SK-N-SH (cell line): ENCODE measurements at regions of chr2 and their contacts with region 1.

Region 1: DNA sequence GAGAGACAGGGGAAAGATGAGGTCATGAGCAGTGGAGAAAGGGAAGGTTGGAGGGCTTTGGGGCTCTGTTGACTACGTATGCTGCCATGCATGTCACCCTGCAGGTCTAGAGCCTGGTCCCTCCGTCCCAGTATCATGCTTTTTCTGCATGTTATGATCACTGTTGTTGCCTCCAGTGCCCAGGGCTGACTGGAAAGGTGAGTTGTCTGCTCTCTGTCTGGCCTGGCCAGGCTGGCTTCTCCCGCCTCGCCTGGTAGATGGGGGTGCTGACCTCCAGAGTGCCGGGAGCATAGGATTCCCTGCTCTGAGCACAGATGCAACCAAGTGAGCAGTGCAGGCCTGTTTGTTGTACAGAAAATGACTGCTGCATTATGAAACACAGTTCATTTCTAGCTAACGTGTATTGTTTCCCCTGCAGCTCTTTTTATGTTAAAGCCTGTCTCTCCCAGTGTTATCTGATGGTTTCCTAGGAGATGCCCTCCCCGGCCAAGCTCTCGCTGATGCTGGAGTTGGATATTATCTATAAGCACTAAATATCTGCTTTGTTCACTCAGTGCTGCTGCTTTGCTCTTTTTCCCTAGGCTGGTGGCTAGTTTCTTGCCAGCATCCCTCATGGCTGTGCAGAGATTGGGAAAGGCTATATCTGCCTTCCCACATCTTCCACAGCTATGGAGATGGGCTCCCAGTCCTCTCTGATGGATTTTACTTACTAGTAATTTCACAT is 158.2 kb downstream of the TDRD15 start:
- DNase-seq: peak; percentile 92
- H3K4me3 ChIP-seq: no peak overlapping the region
- H3K27ac ChIP-seq: peak overlapping the region; percentile 12 to 99; a peak in 2 of 4 replicates
- H3K4me1 ChIP-seq: peaks cover 0 to 67% of the 10 kb centered on the region in 2 experiments; a peak in 2 of 4 replicates
- H3K27me3 ChIP-seq: no peaks in the 10 kb centered on the region
- CTCF ChIP-seq: no peak
- EP300 ChIP-seq: no peak; a peak in 2 of 4 replicates
- RAD21 ChIP-seq: peak; percentile 52

Region 2: DNA sequence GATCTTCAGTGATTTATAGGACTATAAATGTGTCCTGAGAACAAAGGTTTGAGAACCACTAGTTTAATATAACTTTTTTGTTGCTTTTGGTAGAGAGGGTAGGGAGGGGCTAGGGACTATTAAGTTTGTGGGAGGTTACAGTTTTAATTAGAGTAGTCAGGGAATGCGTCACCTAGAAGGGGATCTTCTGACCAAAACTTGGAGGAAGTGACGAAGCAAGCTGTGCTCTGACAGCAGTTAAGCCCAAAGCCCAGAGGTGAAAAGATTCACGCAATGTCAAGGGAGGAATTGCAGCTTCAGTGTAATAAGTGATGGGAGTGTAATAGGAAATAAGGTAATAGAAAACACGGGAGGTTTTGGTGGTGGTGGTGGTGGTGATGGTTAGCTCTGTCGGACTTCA is 150.1 kb before region 1 on chr2:
- CTCF ChIA-PET with region 1: no interaction called
- POLR2A ChIA-PET with region 1: no interaction called
- DNase-seq: no peak
- H3K4me3 ChIP-seq: no peak overlapping the region
- H3K27ac ChIP-seq: no peak overlapping the region
- H3K4me1 ChIP-seq: no peaks in the 10 kb centered on the region
- H3K27me3 ChIP-seq: no peaks in the 10 kb centered on the region
- CTCF ChIP-seq: no peak
- EP300 ChIP-seq: no peak
- RAD21 ChIP-seq: no peak

Region 3: DNA sequence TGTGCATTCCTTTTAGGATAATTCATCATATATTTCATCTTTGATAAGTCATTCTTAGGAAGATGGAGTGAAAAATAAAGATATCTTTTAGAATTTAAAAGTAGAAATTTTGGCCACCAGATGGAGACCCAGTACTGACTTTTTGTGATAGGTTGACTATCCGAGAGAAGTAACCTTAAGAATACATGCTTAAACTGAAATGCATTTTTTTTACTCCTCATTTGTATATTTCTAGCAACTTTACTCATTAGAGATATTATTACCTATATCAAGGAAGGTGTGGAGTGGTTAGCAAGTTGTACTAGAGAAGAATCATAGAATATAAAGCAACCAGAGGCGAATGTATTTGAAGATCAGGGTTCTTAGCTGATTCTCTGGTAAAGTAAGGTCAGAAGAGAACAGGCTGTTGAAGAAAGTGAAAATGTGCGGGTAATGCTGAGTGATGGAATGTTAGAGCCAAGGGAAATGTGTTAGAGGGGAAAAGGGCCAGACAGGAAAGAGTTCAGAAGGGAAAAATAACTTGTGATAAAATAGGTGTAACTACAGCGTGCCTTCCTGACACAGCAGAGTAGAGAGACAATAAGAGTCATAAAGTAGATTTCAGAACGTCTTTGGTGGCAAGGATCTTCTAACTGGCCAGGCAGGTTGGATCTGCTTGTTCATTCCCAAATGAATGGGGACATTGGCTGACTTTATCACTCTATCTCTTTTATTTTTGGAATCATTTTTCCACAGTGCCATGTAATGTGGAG is 105.9 kb before region 1 on chr2:
- CTCF ChIA-PET with region 1: interaction called, 10 read pairs
- POLR2A ChIA-PET with region 1: no interaction called
- DNase-seq: peak; percentile 40
- H3K4me3 ChIP-seq: no peak overlapping the region; a peak in 1 of 4 replicates
- H3K27ac ChIP-seq: peak overlapping the region in 1 of 2 experiments; percentile 13; a peak in 2 of 4 replicates
- H3K4me1 ChIP-seq: peaks cover 0 to 2% of the 10 kb centered on the region in 2 experiments; a peak in 2 of 4 replicates
- H3K27me3 ChIP-seq: no peaks in the 10 kb centered on the region
- CTCF ChIP-seq: peak; percentile 40
- EP300 ChIP-seq: no peak
- RAD21 ChIP-seq: peak; percentile 85

Region 4: DNA sequence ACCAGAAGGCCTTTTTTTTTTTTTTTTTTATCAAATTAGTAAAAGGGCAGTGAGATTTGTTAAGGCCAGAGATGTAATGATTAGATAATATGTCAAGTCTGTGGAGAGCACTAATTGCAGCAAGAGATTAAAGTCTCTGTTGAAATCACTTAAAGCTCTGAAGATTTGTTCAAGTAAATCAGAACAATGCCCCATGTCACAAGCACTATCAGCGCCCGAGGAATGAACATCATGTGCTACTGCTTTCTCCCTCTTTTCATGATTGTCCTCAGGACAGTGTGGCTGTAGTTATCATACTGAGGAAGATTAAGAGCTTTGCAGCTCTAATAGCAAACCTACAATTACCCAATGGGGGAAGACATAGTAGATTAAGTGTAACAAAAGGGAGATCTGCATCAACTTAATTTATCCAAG is 87.1 kb before region 1 on chr2:
- CTCF ChIA-PET with region 1: interaction called, 8 read pairs
- POLR2A ChIA-PET with region 1: interaction called, 12 read pairs
- DNase-seq: peak; percentile 42
- H3K4me3 ChIP-seq: no peak overlapping the region
- H3K27ac ChIP-seq: peak overlapping the region in 1 of 2 experiments; percentile 93; a peak in 2 of 4 replicates
- H3K4me1 ChIP-seq: peaks cover 0 to 47% of the 10 kb centered on the region in 2 experiments; a peak in 2 of 4 replicates
- H3K27me3 ChIP-seq: no peaks in the 10 kb centered on the region
- CTCF ChIP-seq: no peak
- EP300 ChIP-seq: peak in 1 of 2 experiments; percentile 92; a peak in 2 of 4 replicates
- RAD21 ChIP-seq: peak; percentile 25; the same call in 1 of the 2 replicates

Region 5: GRCh38 chr2:21270708-21271122 is 11.2 kb before region 1 on chr2:
- CTCF ChIA-PET with region 1: interaction called, 13 read pairs
- POLR2A ChIA-PET with region 1: interaction called, 9 read pairs
- DNase-seq: peak; percentile 70
- H3K4me3 ChIP-seq: no peak overlapping the region
- H3K27ac ChIP-seq: peak overlapping the region in 1 of 2 experiments; percentile 85; a peak in 2 of 4 replicates
- H3K4me1 ChIP-seq: peaks cover 0 to 59% of the 10 kb centered on the region in 2 experiments; a peak in 2 of 4 replicates
- H3K27me3 ChIP-seq: no peaks in the 10 kb centered on the region
- CTCF ChIP-seq: no peak
- EP300 ChIP-seq: peak in 1 of 2 experiments; percentile 90; a peak in 2 of 4 replicates
- RAD21 ChIP-seq: peak; percentile 28; the same call in 1 of the 2 replicates